ENCODE measurements at regions of chr14 and their contacts with region 1.

Region 1: DNA sequence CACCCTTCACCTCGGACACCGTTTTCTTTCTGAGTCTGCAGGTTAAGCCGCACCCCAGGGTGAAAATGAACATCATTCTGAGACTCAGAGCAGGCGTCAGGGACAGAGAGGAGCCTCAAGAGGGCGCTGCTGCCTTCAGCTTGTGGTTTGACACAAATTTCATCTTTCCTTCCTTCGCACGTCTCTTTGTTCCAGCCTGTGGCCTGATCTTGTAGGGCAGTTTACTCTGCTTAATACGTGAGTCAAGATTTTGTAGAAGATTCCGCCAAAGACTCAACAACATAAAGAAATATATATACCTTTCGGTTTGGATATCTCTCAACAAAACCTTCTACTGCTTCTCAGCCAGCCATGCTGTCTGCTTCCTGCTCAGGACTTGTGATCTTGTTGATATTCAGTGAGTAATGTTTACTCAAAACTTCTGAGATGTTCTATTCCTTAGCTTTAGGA is 329.3 kb upstream of the OR4E1 start:
- DNase-seq: peak; percentile 13 to 56 (median 54)
- H3K4me3 ChIP-seq: no peak overlapping the region
- H3K27ac ChIP-seq: no peak overlapping the region
- H3K4me1 ChIP-seq: peaks cover 0 to 5% (median 2%) of the 10 kb centered on the region in 4 experiments
- H3K27me3 ChIP-seq: no peaks in the 10 kb centered on the region

Region 2: DNA sequence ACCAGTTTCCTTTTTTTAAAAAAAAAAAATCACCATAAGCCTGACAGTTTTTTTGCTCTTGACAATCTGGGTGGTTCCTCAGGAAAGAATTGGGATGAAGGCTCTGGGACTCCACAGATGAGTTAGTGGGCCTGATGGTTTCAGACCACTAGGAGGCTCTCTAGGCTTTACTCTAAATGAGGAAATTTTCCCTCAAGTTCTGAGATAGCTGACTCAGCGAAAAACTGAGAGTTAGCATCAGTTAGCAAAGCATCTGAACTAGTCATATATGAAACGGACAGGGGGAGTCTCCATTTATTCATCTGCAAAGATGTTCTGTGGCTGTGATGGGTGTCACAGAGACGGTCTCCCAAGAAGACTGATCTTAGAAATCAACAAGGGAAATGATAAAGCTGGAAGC is 14.9 kb before region 1 on chr14:
- CTCF ChIA-PET with region 1: interaction called, 16 read pairs
- POLR2A ChIA-PET with region 1: no interaction called
- DNase-seq: peak; percentile 32 to 56 (median 56)
- H3K4me3 ChIP-seq: no peak overlapping the region
- H3K27ac ChIP-seq: no peak overlapping the region
- H3K4me1 ChIP-seq: peaks cover 0 to 2% (median 0%) of the 10 kb centered on the region in 4 experiments
- H3K27me3 ChIP-seq: no peaks in the 10 kb centered on the region

Region 3: DNA sequence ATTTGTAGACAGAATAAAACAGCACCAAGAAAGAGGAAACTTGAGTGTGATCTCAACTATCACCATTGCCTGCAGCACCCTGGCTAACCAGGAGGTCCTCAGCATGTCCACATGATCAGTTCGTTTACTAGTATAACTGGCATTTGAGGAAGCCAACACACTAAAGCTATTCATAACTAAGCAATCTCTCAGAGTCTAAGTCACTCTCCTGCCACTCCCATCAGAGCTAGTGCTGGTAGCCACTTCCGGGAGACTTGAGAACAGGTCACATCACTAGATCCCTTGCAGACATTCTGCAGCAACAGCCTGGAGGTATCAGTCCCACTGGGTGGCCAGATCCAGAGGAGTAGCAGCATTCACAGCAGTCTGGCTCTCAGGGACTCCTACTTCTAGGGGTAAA is 23.6 kb after region 1 on chr14:
- CTCF ChIA-PET with region 1: interaction called, 12 read pairs
- POLR2A ChIA-PET with region 1: no interaction called
- DNase-seq: peak in 1 of 3 donors; percentile 22
- H3K4me3 ChIP-seq: no peak overlapping the region
- H3K27ac ChIP-seq: no peak overlapping the region
- H3K4me1 ChIP-seq: peaks cover 0 to 4% (median 0%) of the 10 kb centered on the region in 4 experiments
- H3K27me3 ChIP-seq: no peaks in the 10 kb centered on the region

Region 4: GRCh38 chr14:22622255-22622654 is 619.4 kb after region 1 on chr14:
- CTCF ChIA-PET with region 1: no interaction called
- POLR2A ChIA-PET with region 1: no interaction called
- DNase-seq: no peak
- H3K4me3 ChIP-seq: no peak overlapping the region
- H3K27ac ChIP-seq: no peak overlapping the region
- H3K4me1 ChIP-seq: peaks cover 8 to 18% (median 15%) of the 10 kb centered on the region in 4 experiments
- H3K27me3 ChIP-seq: no peaks in the 10 kb centered on the region